ENCODE measurements at regions of chr3 and their contacts with region 1.

Region 1: GRCh38 chr3:127697551-127698240 is 24.9 kb downstream of the ABTB1 start:
- DNase-seq: peak; percentile 42
- ATAC-seq: peak; percentile 83
- H3K4me3 Mint-ChIP-seq: peak overlapping the region; percentile 70
- H3K27ac Mint-ChIP-seq: peak overlapping the region; percentile 57
- H3K4me1 Mint-ChIP-seq: peaks cover 24% of the 10 kb centered on the region
- H3K27me3 Mint-ChIP-seq: peaks cover 2% of the 10 kb centered on the region
- CTCF ChIP-seq: no peak

Region 2: DNA sequence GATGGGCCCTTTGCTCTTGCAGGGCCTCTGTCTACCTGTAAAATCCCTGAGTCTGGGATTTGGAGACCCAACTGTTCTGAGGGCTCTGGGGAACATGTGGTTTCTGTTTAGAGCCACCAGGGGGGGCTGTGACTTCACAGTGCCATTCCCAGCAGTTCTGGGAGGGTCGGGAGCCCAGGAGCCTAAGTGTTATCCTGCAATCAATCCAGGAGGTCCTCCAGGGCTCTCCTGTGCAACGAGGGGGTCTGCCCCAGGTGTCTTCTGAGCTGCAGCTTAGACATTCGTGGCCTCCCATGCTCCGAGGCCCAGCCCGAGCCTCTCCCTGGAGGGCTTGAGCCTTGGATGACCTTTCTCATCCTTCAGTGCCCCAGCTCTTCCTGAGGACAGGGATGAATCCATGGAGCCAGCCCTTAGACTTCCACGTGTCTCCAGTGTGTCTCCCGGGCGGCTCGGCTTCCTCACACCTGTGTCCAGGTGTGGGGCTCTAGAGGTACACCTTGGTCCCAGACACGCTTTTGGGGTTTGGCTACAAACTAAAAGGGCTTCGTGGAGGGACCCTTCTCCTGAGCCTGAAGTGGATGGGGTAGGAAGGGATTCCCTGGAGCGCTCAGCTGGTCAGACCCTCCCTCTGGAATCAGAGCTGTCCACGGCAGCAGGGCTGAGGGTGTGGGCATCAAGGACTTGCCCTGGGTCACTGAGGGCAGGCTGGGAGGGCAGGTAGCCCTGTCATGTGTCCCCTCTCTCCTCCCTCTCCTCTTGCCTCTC is 45.3 kb before region 1 on chr3:
- CTCF ChIA-PET with region 1: interaction called, 12 read pairs
- POLR2A ChIA-PET with region 1: interaction called, 3 read pairs
- intact Hi-C with region 1: no loop called
- DNase-seq: no peak
- ATAC-seq: peak; percentile 76
- H3K4me3 Mint-ChIP-seq: no peak overlapping the region
- H3K27ac Mint-ChIP-seq: no peak overlapping the region
- H3K4me1 Mint-ChIP-seq: no peaks in the 10 kb centered on the region
- H3K27me3 Mint-ChIP-seq: no peaks in the 10 kb centered on the region
- CTCF ChIP-seq: peak; percentile 5

Region 3: DNA sequence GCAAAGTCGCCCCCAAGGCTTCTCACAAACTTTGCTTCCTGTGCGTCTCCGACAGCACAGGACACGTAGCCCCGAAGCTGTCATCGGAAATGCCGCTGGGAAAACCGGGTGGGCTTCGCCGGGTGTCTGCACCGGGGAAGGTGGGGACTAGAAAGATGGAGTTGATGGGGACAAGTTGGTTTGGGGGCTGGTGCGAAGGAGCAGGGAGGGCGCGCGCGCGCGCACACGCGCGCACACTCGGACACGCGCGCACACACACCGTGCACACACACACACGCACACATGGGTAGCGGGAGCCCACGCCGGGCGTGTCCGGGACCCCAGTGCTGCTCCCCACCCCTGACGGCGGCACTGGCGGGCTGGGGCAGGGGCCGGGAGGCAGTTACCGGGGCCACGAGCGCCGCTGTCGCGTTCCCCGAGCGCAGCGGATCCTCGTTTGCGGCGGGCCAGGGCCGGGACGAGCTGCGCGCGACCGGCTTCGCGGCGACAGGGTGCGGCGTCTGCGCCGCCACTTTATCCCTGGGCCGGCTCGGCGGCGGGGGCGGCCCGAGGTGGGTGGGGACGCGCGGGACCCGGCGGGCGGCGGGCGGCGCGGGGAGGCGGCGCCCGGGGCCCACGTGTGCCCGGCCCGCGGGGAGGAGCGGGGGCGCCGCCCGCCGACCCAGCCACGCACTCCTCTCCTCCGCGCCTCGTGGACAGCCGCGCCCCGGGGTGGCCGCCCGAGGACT is 125.2 kb after region 1 on chr3:
- CTCF ChIA-PET with region 1: interaction called, 3 read pairs
- POLR2A ChIA-PET with region 1: interaction called, 5 read pairs
- intact Hi-C with region 1: loop called (anchors 2 kb)
- DNase-seq: peak; percentile 39
- ATAC-seq: peak; percentile 72
- H3K4me3 Mint-ChIP-seq: peak overlapping the region; percentile 93
- H3K27ac Mint-ChIP-seq: peak overlapping the region; percentile 74
- H3K4me1 Mint-ChIP-seq: peaks cover 29% of the 10 kb centered on the region
- H3K27me3 Mint-ChIP-seq: peaks cover 14% of the 10 kb centered on the region
- CTCF ChIP-seq: no peak

Region 4: DNA sequence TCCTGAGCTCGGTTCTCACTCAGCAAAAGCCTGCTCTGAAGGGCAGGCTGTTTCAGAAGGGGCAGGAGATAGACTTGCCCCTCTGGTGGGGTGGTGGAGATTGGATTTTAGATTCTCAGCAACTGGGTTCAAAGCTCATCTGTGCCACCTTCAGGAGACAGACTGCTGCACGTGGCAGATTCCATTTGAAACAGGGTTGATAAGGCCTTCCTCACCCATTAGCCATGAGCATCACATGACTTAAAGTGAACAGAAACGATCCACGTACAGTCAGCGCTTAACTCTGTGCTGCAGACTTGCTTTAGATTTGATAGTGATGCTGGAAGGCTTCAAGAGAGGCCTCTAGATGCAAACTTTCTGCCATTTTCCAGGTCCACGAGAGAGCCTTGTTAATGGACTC is 159.6 kb after region 1 on chr3:
- CTCF ChIA-PET with region 1: no interaction called
- POLR2A ChIA-PET with region 1: no interaction called
- intact Hi-C with region 1: loop called (anchors 2 kb)
- DNase-seq: no peak
- ATAC-seq: peak; percentile 64
- H3K4me3 Mint-ChIP-seq: no peak overlapping the region
- H3K27ac Mint-ChIP-seq: no peak overlapping the region
- H3K4me1 Mint-ChIP-seq: no peaks in the 10 kb centered on the region
- H3K27me3 Mint-ChIP-seq: no peaks in the 10 kb centered on the region
- CTCF ChIP-seq: no peak

Region 5: GRCh38 chr3:127970966-127971592 is 273.4 kb after region 1 on chr3:
- CTCF ChIA-PET with region 1: interaction called, 4 read pairs
- POLR2A ChIA-PET with region 1: no interaction called
- intact Hi-C with region 1: loop called (anchors 1 kb)
- DNase-seq: no peak
- ATAC-seq: peak; percentile 67
- H3K4me3 Mint-ChIP-seq: no peak overlapping the region
- H3K27ac Mint-ChIP-seq: no peak overlapping the region
- H3K4me1 Mint-ChIP-seq: no peaks in the 10 kb centered on the region
- H3K27me3 Mint-ChIP-seq: peaks cover 5% of the 10 kb centered on the region
- CTCF ChIP-seq: peak; percentile 30